AG04450 (cell line): ENCODE measurements at regions of chr22 and their contacts with region 1.

Region 1: GRCh38 chr22:36286471-36287224 is 33.7 kb downstream of the APOL1 start:
- DNase-seq: peak; percentile 56
- H3K4me3 ChIP-seq: no peak overlapping the region
- H3K27ac ChIP-seq: peak overlapping the region; percentile 52
- H3K27me3 ChIP-seq: no peaks in the 10 kb centered on the region
- CTCF ChIP-seq: peak; percentile 94

Region 2: GRCh38 chr22:36194971-36195370 is 91.7 kb before region 1 on chr22:
- CTCF ChIA-PET with region 1: interaction called, 14 read pairs
- POLR2A ChIA-PET with region 1: no interaction called
- DNase-seq: peak; percentile 52
- H3K4me3 ChIP-seq: no peak overlapping the region
- H3K27ac ChIP-seq: no peak overlapping the region
- H3K27me3 ChIP-seq: peaks cover 12% of the 10 kb centered on the region
- CTCF ChIP-seq: peak; percentile 89

Region 3: DNA sequence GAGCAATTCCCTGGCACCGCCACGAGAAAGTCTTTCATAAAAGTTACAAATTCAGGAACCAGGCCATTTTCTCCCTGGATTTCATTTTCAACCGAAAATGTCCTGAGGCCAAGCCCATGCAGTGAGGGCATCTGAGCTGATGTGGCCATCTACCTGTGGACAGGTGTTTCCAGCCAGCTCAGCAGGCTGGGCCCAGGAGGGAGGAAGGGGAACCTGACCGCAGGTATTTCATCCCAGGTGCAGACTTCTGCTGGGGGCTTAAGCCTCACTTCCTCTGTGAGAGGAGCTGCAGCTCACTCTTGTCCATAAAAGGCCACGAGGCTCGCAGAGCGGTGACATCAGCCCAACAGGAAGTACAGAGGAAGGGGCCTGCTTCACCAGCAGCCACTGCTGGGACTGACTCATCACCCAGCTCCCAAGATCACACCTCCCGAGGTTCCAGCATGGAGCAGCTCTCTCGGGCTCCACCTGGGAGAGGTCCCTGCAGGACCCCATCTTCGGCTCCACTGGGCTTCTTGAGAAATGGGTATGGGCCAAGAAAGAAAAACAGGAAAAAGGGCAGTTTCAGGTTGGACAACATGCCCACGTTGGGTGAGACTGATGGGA is 44.8 kb after region 1 on chr22:
- CTCF ChIA-PET with region 1: no interaction called
- POLR2A ChIA-PET with region 1: no interaction called
- DNase-seq: peak; percentile 89
- H3K4me3 ChIP-seq: no peak overlapping the region
- H3K27ac ChIP-seq: peak overlapping the region; percentile 100
- H3K27me3 ChIP-seq: no peaks in the 10 kb centered on the region
- CTCF ChIP-seq: no peak